HCT116 (cell line): ENCODE measurements at regions of chr19 and their contacts with region 1.

Region 1: DNA sequence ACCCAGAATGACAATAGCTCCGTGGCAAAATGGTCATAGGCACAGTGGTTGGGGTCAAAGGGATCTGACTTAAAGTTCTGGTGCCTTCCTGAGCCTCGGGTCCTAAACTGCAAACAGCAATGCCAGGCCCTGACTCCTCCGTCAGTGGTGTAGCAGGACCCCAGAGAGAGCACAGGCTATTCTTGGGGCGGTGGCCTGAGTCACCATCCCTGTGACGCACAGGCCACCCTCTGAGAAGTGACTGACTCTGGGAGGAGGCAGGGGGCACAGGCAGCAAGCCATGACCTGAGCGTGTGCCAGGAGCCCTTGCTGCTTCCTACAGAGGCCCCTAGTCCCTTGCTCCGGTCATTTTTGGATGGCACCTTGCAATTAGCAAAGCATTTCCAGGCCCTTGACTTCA is 18.7 kb downstream of the PLVAP start:
- DNase-seq: peak; percentile 37
- ATAC-seq: peak; percentile 91
- H3K4me3 ChIP-seq: no peak overlapping the region
- H3K27ac ChIP-seq: no peak overlapping the region
- H3K4me1 ChIP-seq: peaks cover 6 to 10% of the 10 kb centered on the region in 2 experiments; a peak in 3 of 4 replicates
- H3K27me3 ChIP-seq: no peaks in the 10 kb centered on the region
- CTCF ChIP-seq: no peak
- POLR2A ChIP-seq: no peak
- RAD21 ChIP-seq: no peak

Region 2: GRCh38 chr19:17323964-17324332 is 34.4 kb before region 1 on chr19:
- CTCF ChIA-PET with region 1: no interaction called
- POLR2A ChIA-PET with region 1: no interaction called
- RAD21 ChIA-PET with region 1: no interaction called
- intact Hi-C with region 1: no loop called
- DNase-seq: no peak
- ATAC-seq: no peak
- H3K4me3 ChIP-seq: no peak overlapping the region
- H3K27ac ChIP-seq: no peak overlapping the region
- H3K4me1 ChIP-seq: peaks cover 5 to 18% of the 10 kb centered on the region in 2 experiments
- H3K27me3 ChIP-seq: no peaks in the 10 kb centered on the region
- CTCF ChIP-seq: no peak
- POLR2A ChIP-seq: no peak
- RAD21 ChIP-seq: no peak

Region 3: DNA sequence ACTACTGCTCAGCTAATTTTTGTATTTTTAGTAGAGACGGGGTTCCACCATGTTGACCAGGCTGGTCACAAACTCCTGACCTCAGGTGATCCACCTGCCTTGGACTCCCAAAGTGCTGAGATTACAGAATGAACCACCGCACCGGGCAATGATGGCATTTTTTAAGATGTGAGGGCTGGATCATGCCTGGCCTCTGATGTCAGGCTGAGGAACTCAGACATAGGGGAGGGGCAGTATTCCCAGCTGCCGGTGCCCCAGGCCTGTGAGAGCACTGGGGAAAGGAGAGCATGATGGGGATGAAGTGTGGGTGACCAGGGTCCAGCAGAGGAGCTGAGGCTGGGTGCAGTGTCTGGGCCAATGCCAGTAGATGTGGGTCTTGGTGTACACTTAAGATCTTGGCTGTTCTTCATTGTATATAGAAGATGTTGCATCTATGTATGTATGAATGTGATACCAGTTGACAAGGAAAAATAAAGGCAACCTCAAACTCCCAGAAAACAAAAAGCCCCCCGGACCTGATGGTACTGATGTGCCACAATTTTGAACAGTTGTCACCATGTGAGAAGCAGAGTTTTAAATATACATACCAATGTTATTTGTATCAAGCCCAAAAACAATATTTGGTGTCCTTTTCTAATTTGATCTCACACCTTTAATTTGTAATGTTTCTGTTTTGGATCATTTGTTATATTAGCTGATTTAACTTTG is 22.2 kb after region 1 on chr19:
- CTCF ChIA-PET with region 1: no interaction called
- POLR2A ChIA-PET with region 1: no interaction called
- RAD21 ChIA-PET with region 1: interaction called in 1 of 2 experiments, 11 read pairs
- intact Hi-C with region 1: no loop called
- DNase-seq: no peak
- ATAC-seq: no peak
- H3K4me3 ChIP-seq: no peak overlapping the region
- H3K27ac ChIP-seq: no peak overlapping the region
- H3K4me1 ChIP-seq: peaks cover 19 to 22% of the 10 kb centered on the region in 2 experiments
- H3K27me3 ChIP-seq: no peaks in the 10 kb centered on the region
- CTCF ChIP-seq: no peak
- POLR2A ChIP-seq: no peak
- RAD21 ChIP-seq: no peak

Region 4: DNA sequence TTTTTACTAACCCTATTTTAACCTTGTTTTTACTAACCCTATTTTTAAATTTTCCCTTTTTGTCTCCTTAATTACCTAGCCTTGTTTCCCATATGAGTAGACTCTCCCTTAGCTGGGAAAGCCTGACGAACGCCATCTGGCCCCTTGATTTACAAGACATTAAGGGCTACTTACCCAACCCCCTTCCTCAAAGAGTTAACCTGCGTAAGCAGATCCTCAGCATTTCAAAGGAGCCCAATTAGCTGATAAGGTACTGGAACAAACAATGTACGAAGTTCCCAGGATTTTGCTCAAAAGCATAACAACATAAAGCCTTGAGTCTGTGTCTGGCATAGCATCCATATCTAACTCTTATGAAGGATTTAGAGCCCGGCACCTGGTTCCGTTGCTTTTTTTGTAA is 56.7 kb after region 1 on chr19:
- CTCF ChIA-PET with region 1: no interaction called
- POLR2A ChIA-PET with region 1: no interaction called
- RAD21 ChIA-PET with region 1: no interaction called
- intact Hi-C with region 1: no loop called
- DNase-seq: no peak
- ATAC-seq: no peak
- H3K4me3 ChIP-seq: no peak overlapping the region
- H3K27ac ChIP-seq: no peak overlapping the region
- H3K4me1 ChIP-seq: peaks cover 5 to 15% of the 10 kb centered on the region in 2 experiments; a peak in 3 of 4 replicates
- H3K27me3 ChIP-seq: no peaks in the 10 kb centered on the region
- CTCF ChIP-seq: no peak
- POLR2A ChIP-seq: no peak
- RAD21 ChIP-seq: no peak